Activated T-helper 1 cell treated with anti-CD3 and anti-CD28 coated beads, Interleukin-12 subunit alpha, Interleukin-12 subunit beta, Interleukin-2, Interleukin-4 antibody, amounts not matched to agents 30 ng/mL and 10 ng/mL and 1 ng/mL, durations not matched to agents 14 hours and 24 hours and 36 hours (primary cell): ENCODE measurements at regions of chr10 and their contacts with region 1.

Region 1: DNA sequence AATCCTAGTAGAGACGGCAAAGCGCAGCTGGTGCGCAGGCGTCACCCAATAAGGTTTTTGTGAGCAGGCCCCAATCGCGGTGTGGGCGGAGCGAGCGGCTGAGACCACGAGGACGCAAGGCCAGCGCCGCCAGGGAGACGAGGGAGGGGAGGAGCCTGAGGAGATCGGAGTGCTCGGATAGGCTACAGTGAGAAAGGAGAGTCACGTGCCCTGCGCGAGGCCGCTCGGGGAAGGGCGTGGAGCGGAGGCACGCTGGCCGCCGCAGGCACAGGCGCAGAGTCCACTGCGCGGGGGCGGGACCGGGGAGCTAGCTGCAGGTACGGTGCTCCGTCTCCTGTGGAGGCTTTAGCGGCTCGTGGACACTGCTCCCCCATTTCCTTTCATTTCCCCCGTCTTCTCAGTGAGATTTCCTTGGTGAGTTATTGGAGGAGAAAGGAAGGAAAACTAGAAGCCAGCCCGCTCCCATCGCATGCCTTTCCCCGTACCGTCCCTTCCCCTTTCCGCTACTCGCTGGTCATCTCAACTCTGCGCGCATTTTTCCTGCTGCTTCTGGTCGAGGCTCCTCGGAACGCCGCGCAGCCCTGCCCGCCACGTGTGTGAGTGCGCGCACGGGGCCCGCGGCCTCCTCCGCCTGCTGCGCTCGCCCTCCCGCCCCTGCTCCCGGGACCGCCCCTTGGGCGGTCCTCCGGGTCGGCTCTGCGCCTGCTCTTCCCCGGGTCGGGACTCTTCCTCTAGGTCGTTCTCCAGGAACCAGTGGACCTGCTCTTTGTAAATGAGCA is at the start of gene THNSL1:
- DNase-seq: peak; percentile 97
- H3K4me3 Mint-ChIP-seq: peak within 1 kb of the TSS; percentile 89
- H3K27ac Mint-ChIP-seq: peak within 1 kb of the TSS; percentile 95
- H3K4me1 Mint-ChIP-seq: peaks cover 16% of the 10 kb centered on the region
- H3K27me3 Mint-ChIP-seq: peaks cover 2% of the 10 kb centered on the region
- total RNA-seq, gene THNSL1: 3.0 and 3.1 TPM in 2 replicates

Region 2: DNA sequence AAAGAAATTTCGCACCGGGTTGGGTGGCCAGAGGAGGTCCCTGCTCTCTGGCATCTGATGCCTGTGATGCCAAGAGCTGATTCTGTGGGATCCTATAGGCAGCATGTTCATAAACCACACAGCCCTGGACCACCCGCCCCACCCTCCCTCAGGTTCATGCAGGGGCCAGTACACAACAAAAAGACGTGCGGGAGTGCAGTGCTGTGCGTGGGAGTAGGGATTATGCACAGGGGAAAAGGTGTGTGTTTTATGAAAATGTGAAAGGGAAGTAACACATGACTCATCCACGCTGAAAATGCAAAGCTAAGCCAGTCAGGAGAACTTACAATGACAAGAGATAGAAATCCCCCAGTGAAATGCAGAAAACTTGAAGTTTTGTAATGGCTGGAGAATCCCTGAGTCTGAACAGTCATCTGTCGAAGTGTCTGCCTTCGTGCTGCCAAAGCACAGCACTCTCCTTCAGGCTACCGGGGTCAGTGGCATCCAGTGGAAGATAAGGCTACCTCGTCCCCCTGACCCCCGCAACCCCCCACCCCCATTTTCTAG is 806.5 kb before region 1 on chr10:
- intact Hi-C with region 1: loop called (anchors 5 kb)
- DNase-seq: peak; percentile 8
- H3K4me3 Mint-ChIP-seq: peak overlapping the region; percentile 83
- H3K27ac Mint-ChIP-seq: peak overlapping the region; percentile 90
- H3K4me1 Mint-ChIP-seq: peaks cover 39% of the 10 kb centered on the region
- H3K27me3 Mint-ChIP-seq: peaks cover 24% of the 10 kb centered on the region

Region 3: DNA sequence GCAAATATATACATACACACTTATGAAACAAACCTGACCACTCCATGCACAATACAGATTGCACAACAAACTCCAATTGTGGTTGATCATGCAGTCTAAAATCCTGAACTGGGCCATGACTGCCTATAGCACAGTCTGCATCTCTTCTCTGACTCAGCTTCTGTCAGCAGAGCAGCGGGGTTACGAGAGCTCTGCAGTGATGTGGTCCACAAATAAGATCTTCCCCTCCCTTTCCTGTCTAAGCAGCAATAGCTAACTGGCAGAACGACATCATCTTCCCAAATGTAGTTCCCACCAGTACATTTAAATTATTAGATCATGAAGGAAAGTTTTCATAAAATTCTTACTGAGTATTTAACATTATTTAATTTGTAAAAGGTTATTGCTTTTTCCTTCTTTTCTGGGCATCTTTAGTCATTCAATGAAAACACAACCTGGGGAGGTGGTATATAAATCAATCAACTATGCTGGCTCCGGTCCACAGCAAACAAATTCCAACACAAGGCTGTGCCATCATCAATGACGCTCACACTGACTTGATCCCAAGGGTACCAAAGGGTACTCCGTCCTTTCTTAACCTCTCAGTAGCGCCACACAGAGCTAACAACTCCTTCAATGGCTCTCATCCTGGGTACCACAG is 310.0 kb before region 1 on chr10:
- intact Hi-C with region 1: loop called (anchors 5 kb)
- DNase-seq: peak; percentile 26
- H3K4me3 Mint-ChIP-seq: no peak overlapping the region
- H3K27ac Mint-ChIP-seq: no peak overlapping the region
- H3K4me1 Mint-ChIP-seq: peaks cover 23% of the 10 kb centered on the region
- H3K27me3 Mint-ChIP-seq: no peaks in the 10 kb centered on the region

Region 4: DNA sequence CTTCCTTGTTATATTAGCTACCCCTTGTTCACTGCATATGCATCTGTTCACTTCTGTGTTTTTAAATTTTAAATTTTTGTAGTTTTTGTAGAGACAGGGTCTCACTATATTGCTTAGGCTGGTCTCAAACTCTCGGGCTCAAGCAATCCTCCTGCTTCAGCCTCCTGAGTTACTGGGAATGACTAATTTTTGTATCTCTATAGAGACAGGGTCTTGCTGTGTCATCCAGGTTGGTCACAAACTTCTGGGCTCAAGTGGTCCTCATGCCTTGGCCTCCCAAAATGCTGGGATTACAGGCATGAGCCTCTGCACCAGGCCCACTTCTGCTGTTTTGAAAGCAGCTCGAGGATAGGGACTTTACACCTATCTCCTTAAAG is 128.7 kb before region 1 on chr10:
- intact Hi-C with region 1: loop called (anchors 5 kb)
- DNase-seq: no peak
- H3K4me3 Mint-ChIP-seq: peak overlapping the region; percentile 21
- H3K27ac Mint-ChIP-seq: peak overlapping the region; percentile 69
- H3K4me1 Mint-ChIP-seq: peaks cover 30% of the 10 kb centered on the region
- H3K27me3 Mint-ChIP-seq: no peaks in the 10 kb centered on the region

Region 5: GRCh38 chr10:24952707-24953645 is 63.6 kb before region 1 on chr10:
- intact Hi-C with region 1: loop called (anchors 1 kb)
- DNase-seq: peak; percentile 7
- H3K4me3 Mint-ChIP-seq: peak overlapping the region; percentile 79
- H3K27ac Mint-ChIP-seq: no peak overlapping the region
- H3K4me1 Mint-ChIP-seq: peaks cover 16% of the 10 kb centered on the region
- H3K27me3 Mint-ChIP-seq: no peaks in the 10 kb centered on the region

Region 6: DNA sequence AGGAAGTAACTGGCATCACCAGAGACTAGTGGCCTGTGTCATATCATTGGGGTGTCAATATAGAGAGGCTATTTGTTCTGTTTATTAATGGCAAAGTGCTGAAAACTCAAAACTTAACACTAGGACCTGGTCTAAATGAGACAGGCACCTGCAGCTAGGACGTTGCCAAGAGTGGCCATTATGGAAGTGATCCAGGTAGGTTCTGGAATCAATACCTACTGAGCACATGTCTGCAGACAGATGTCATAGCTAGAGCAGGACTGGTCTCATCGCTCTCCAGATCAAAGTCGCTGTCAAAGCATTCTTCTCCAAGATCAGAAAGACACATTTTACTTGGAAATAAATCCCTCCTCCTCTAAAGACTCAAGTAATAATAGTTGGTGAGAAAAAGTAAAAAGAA is 40.2 kb after region 1 on chr10:
- intact Hi-C with region 1: no loop called
- DNase-seq: no peak
- H3K4me3 Mint-ChIP-seq: no peak overlapping the region
- H3K27ac Mint-ChIP-seq: no peak overlapping the region
- H3K4me1 Mint-ChIP-seq: peaks cover 4% of the 10 kb centered on the region
- H3K27me3 Mint-ChIP-seq: no peaks in the 10 kb centered on the region